ENCODE measurements at regions of chr12 and their contacts with region 1.

Region 1: GRCh38 chr12:132414634-132415326 is 75.2 kb upstream of the FBRSL1 start:
- DNase-seq: peak; percentile 80
- H3K4me3 Mint-ChIP-seq: no peak overlapping the region
- H3K27ac Mint-ChIP-seq: no peak overlapping the region
- H3K4me1 Mint-ChIP-seq: no peaks in the 10 kb centered on the region
- H3K27me3 Mint-ChIP-seq: no peaks in the 10 kb centered on the region

Region 2: DNA sequence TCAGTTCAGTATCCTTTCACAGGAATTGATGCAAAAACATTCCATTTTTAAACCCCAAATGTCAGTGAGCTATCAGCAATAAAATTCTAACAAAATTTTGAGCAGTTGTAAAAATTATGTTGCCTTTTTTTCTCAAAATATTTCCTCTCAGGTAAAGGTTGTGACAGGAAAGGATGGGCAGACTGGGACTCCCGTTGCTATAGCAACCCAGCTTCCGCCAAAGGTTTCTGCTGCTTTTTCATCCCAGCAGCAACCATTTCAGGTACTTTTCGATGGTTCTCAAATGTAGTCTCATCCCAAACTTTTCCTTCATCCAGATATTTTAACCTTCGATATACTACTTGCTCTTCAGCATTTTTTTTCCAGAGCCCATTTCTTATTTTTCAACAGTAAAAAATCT is 451.4 kb before region 1 on chr12:
- CTCF ChIA-PET with region 1: no interaction called
- intact Hi-C with region 1: no loop called
- DNase-seq: peak; percentile 28
- H3K4me3 Mint-ChIP-seq: no peak overlapping the region
- H3K27ac Mint-ChIP-seq: peak overlapping the region; percentile 41
- H3K4me1 Mint-ChIP-seq: peaks cover 52% of the 10 kb centered on the region
- H3K27me3 Mint-ChIP-seq: no peaks in the 10 kb centered on the region

Region 3: GRCh38 chr12:132153501-132154340 is 261.1 kb before region 1 on chr12:
- CTCF ChIA-PET with region 1: interaction called, 17 read pairs
- intact Hi-C with region 1: loop called (anchors 1 kb)
- DNase-seq: peak; percentile 69
- H3K4me3 Mint-ChIP-seq: no peak overlapping the region
- H3K27ac Mint-ChIP-seq: no peak overlapping the region
- H3K4me1 Mint-ChIP-seq: no peaks in the 10 kb centered on the region
- H3K27me3 Mint-ChIP-seq: no peaks in the 10 kb centered on the region

Region 4: DNA sequence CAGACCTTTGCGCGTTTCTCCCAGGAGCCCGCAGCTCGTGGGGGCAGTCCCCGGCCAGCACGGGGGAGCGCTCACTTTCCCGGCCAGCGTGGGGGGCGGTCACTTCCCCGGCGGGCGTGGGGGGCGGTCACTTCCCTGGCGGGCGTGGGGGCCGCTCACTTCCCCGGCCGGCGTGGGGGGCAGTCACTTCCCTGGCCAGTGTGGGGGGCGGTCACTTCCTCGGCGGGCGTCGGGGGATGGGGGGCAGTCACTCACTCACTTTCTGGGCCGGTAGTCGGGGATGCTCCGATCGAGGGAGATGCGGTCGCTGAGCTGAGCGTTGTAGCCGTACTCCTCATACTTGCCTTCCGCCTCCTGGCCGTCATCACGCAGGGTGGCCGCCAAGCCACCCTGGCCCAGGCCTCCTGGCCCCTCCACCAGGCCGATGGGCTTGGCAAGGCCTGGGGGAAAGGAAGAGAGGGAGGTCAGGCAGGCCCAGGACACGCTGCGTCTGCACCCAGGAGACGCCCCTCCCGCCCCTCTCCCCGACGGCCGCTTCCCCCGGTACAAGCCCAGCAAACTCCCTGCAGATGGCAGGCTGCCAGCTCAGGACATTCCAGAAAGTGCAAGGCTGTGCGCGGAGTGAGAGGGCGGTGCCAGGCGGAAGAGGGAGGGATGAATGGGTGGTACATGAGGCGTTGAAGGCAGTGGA is 128.6 kb before region 1 on chr12:
- CTCF ChIA-PET with region 1: no interaction called
- intact Hi-C with region 1: loop called (anchors 2 kb)
- DNase-seq: peak; percentile 21
- H3K4me3 Mint-ChIP-seq: no peak overlapping the region
- H3K27ac Mint-ChIP-seq: no peak overlapping the region
- H3K4me1 Mint-ChIP-seq: peaks cover 18% of the 10 kb centered on the region
- H3K27me3 Mint-ChIP-seq: peaks cover 28% of the 10 kb centered on the region

Region 5: GRCh38 chr12:132367071-132367851 is 47.5 kb before region 1 on chr12:
- CTCF ChIA-PET with region 1: no interaction called
- intact Hi-C with region 1: no loop called
- DNase-seq: no peak
- H3K4me3 Mint-ChIP-seq: no peak overlapping the region
- H3K27ac Mint-ChIP-seq: no peak overlapping the region
- H3K4me1 Mint-ChIP-seq: no peaks in the 10 kb centered on the region
- H3K27me3 Mint-ChIP-seq: peaks cover 22% of the 10 kb centered on the region

Region 6: GRCh38 chr12:132429946-132430643 is 15.3 kb after region 1 on chr12:
- CTCF ChIA-PET with region 1: interaction called, 13 read pairs
- intact Hi-C with region 1: no loop called
- DNase-seq: peak; percentile 71
- H3K4me3 Mint-ChIP-seq: peak overlapping the region; percentile 59
- H3K27ac Mint-ChIP-seq: no peak overlapping the region
- H3K4me1 Mint-ChIP-seq: peaks cover 20% of the 10 kb centered on the region
- H3K27me3 Mint-ChIP-seq: no peaks in the 10 kb centered on the region

Region 7: DNA sequence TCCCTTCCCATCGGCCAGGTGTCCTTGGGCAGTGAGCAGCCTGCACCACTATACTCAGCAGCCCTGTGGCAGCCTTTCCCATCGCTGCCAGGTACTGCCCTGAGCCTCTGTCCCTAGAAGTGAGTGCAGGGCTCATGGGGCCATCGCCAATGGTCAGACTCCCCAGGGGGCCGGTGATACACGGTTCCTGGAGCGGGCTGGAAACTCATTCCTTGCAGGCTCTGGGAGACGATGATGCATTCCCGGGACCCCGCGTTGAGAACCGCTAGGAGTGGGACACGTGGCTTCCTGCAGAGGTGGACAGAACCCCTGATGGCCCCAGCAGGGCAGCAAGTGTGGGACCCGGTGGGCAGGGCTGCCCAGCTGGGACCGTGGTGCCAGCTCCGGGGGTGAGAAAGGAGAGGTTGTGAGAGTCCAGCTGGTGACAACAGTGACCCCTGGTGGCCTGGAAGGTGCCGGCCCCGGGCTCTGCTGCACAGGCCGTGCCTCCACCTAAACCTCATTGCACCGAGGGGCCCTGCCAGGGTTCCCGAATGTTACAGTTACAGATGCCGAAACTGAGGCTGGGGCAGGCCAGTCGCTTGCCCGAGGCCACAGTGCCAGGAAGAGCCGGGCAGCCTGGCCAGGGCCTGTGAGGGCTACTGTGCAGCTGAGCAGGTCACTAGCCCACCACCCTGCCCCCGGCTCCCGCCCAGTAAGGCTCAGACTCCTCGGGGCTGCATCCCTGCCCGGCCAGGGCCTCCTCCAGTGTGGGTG is 109.0 kb after region 1 on chr12:
- CTCF ChIA-PET with region 1: interaction called, 14 read pairs
- intact Hi-C with region 1: loop called (anchors 1 kb)
- DNase-seq: peak; percentile 83
- H3K4me3 Mint-ChIP-seq: no peak overlapping the region
- H3K27ac Mint-ChIP-seq: no peak overlapping the region
- H3K4me1 Mint-ChIP-seq: peaks cover 9% of the 10 kb centered on the region
- H3K27me3 Mint-ChIP-seq: no peaks in the 10 kb centered on the region

Region 8: GRCh38 chr12:132560614-132561426 is 146.0 kb after region 1 on chr12:
- CTCF ChIA-PET with region 1: interaction called, 22 read pairs
- intact Hi-C with region 1: loop called (anchors 1 kb)
- DNase-seq: peak; percentile 83
- H3K4me3 Mint-ChIP-seq: peak overlapping the region; percentile 75
- H3K27ac Mint-ChIP-seq: no peak overlapping the region
- H3K4me1 Mint-ChIP-seq: peaks cover 5% of the 10 kb centered on the region
- H3K27me3 Mint-ChIP-seq: peaks cover 7% of the 10 kb centered on the region

Region 9: GRCh38 chr12:132614861-132615578 is 200.2 kb after region 1 on chr12:
- CTCF ChIA-PET with region 1: interaction called, 22 read pairs
- intact Hi-C with region 1: loop called (anchors 1 kb)
- DNase-seq: peak; percentile 88
- H3K4me3 Mint-ChIP-seq: no peak overlapping the region
- H3K27ac Mint-ChIP-seq: no peak overlapping the region
- H3K4me1 Mint-ChIP-seq: peaks cover 15% of the 10 kb centered on the region
- H3K27me3 Mint-ChIP-seq: peaks cover 41% of the 10 kb centered on the region

Region 10: GRCh38 chr12:133190176-133190575 is 775.4 kb after region 1 on chr12:
- CTCF ChIA-PET with region 1: no interaction called
- intact Hi-C with region 1: no loop called
- DNase-seq: no peak
- H3K4me3 Mint-ChIP-seq: no peak overlapping the region
- H3K27ac Mint-ChIP-seq: no peak overlapping the region
- H3K4me1 Mint-ChIP-seq: peaks cover 5% of the 10 kb centered on the region
- H3K27me3 Mint-ChIP-seq: no peaks in the 10 kb centered on the region